Lower leg skin (tissue), 4 donors: ENCODE measurements at regions of chr16 and their contacts with region 1.

Region 1: GRCh38 chr16:67296422-67296821 is 17.1 kb downstream of the PLEKHG4 start:
- DNase-seq: no peak
- H3K4me3 ChIP-seq: no peak overlapping the region
- CTCF ChIP-seq: no peak
- POLR2A ChIP-seq: no peak

Region 2: GRCh38 chr16:67207857-67208519 is 88.4 kb before region 1 on chr16:
- intact Hi-C with region 1: no loop called
- DNase-seq: no peak
- H3K4me3 ChIP-seq: no peak overlapping the region
- CTCF ChIP-seq: no peak
- POLR2A ChIP-seq: no peak

Region 3: GRCh38 chr16:67329901-67330300 is 33.5 kb after region 1 on chr16:
- intact Hi-C with region 1: loop called (anchors 5 kb)
- DNase-seq: no peak
- H3K4me3 ChIP-seq: no peak overlapping the region
- CTCF ChIP-seq: no peak
- POLR2A ChIP-seq: no peak